GM10248 (cell line): ENCODE measurements at regions of chr10 and their contacts with region 1.

Region 1: DNA sequence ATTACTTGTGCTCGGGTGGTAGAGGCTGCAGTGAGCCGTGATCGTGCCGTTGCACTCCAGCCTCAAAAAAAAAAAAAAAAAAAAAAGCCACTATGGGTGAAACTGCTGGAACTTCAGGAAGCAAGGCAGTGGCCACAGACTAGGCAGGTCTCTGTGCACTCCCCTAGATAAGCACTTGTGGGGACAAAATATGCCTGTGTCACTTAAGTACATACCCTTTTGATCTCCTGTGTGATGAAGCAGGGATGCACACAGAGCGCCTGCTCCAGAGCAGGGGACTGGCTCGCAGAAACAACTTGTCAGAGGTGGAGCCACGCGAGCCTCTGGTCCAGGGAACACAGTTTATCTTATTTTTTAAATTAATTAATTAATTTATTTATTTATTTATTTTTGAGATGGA is 42.9 kb upstream of the PSAP start:
- DNase-seq: no peak
- CTCF ChIP-seq: no peak

Region 2: DNA sequence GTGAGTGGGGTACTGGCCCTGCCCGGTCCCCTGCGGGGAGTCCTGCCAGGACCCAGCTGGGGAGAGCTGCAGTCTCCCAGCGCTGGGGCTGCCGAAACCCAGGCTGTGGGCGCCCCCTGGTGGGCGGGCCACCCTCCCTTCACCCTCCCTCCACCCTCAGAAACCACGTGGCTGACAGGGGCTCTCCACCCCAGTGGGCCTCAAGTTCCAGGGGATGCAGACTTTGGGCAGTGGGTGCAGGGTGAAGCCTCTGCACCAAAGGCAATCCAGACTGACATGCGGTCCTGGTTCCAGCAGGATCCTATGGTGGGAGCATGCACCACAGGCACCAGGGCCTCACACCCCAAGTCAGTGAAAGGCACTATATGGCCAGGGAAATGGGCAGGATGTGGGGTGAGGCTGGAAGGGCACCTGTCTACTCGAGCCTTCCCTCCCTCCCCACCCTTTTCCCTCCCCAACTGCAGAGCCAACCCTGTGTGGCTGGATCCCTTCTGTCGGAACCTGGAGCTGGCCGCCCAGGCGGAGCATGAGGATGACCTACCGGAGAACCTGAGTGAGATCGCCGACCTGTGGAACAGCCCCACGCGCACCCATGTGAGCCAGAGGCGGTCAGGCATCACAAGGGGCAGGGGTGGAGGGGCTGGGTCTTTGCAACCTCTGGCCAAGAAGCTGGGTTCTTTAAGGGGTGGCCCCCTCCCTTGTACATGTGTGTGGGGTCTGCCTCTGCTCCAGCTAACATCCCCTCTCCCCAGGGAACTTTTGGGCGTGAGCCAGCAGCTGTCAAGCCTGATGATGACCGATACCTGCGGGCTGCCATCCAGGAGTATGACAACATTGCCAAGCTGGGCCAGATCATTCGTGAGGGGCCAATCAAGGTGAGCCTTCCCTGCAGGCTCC is 81.7 kb before region 1 on chr10:
- CTCF ChIA-PET with region 1: interaction called, 17 read pairs
- POLR2A ChIA-PET with region 1: interaction called, 4 read pairs
- DNase-seq: peak; percentile 87
- CTCF ChIP-seq: peak; percentile 92

Region 3: GRCh38 chr10:71845410-71846405 is 48.2 kb before region 1 on chr10:
- CTCF ChIA-PET with region 1: interaction called, 90 read pairs
- POLR2A ChIA-PET with region 1: no interaction called
- DNase-seq: no peak
- CTCF ChIP-seq: no peak

Region 4: DNA sequence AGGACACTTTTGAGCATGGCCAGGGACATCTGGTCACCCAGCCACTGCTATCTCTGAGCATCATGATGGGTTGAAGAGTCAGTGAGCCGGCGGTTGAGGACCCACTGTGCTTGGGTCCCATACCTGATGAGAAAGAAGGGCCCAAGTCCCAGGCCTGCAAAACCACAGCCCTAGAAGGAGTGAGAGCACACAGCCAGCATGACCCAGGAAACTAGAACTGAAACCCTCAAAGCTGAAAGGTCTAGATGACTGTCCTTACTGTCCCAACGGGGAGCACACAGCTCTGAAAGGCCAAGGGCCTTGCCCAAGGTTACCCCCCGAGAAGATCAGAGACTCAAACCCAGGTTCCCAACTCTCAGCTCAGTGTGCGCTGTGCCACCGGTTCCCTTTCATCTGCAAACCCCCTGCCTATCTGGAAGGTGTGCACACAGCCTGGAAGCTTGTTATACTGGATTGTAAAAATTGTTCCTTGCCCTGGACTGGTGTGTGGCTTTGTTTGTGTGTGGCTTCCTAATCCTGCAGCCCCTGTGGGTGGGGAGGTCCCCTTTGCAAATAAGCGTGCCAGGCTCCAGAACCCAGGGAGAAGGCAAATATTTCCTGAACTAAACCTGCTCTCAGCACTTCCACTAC is 20.2 kb before region 1 on chr10:
- CTCF ChIA-PET with region 1: interaction called, 27 read pairs
- POLR2A ChIA-PET with region 1: no interaction called
- DNase-seq: peak; percentile 85
- CTCF ChIP-seq: no peak

Region 5: DNA sequence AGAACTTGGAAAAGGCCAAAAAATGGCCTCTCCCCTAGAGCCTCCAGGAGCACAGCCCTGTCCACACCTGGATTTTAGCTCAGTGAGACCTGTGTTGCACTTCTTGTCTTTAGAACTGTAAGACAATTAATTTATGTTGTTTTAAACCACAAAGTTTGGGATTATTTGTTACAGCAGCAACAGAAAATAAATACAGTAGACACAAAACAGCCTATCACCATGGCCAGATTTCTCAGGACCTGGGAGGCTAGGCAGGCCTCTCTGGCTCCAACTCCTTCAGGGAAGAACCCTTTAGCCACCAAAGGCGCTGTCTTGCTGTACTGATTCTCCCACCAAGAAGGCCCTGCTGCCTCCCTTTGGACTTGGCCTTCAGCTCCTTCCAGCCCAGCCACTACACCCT is 11.2 kb after region 1 on chr10:
- CTCF ChIA-PET with region 1: interaction called, 16 read pairs
- POLR2A ChIA-PET with region 1: no interaction called
- DNase-seq: no peak
- CTCF ChIP-seq: no peak

Region 6: GRCh38 chr10:71945819-71946474 is 52.0 kb after region 1 on chr10:
- CTCF ChIA-PET with region 1: interaction called, 10 read pairs
- POLR2A ChIA-PET with region 1: no interaction called
- DNase-seq: no peak
- CTCF ChIP-seq: no peak

Region 7: GRCh38 chr10:72058989-72059842 is 165.3 kb after region 1 on chr10:
- CTCF ChIA-PET with region 1: no interaction called
- POLR2A ChIA-PET with region 1: no interaction called
- DNase-seq: no peak
- CTCF ChIP-seq: no peak

Region 8: DNA sequence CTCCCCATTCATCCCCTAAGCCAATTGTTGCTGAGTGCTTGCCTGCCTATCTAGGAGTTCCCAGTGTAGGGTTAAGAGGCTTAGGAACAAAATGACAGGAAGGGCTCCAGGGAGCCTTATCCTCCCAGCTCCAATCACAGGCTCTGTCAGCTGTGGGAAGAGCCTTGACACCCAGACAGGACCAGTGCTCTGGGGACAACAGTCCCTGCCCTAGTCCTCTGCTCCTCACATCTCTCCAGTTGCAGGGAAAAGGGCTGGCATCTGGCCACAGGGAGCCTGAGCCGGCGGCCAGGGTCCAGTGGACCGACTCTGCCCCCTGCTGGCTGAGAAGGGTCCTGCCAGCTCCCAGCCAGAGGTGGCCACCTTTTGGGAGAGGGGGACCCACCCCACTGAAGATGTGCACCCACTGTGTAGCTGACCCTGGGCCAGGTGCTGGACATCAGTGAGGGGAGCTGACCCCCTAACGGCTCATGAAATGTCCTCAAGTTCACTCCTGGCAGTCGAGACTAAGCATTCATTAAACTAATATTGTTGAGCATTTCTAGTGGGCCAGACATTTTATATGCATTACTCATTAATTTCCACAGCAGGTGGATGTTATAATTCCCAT is 443.2 kb after region 1 on chr10:
- CTCF ChIA-PET with region 1: interaction called, 17 read pairs
- POLR2A ChIA-PET with region 1: no interaction called
- DNase-seq: peak; percentile 68
- CTCF ChIP-seq: peak; percentile 96